ENCODE measurements at regions of chr17 and their contacts with region 1.

Region 1: GRCh38 chr17:11779892-11780291 is 181.6 kb downstream of the DNAH9 start:
- DNase-seq: no peak
- H3K4me3 ChIP-seq: no peak overlapping the region
- H3K27ac ChIP-seq: no peak overlapping the region
- H3K4me1 ChIP-seq: no peaks in the 10 kb centered on the region
- H3K27me3 ChIP-seq: no peaks in the 10 kb centered on the region
- CTCF ChIP-seq: no peak
- EP300 ChIP-seq: no peak
- POLR2A ChIP-seq: no peak

Region 2: DNA sequence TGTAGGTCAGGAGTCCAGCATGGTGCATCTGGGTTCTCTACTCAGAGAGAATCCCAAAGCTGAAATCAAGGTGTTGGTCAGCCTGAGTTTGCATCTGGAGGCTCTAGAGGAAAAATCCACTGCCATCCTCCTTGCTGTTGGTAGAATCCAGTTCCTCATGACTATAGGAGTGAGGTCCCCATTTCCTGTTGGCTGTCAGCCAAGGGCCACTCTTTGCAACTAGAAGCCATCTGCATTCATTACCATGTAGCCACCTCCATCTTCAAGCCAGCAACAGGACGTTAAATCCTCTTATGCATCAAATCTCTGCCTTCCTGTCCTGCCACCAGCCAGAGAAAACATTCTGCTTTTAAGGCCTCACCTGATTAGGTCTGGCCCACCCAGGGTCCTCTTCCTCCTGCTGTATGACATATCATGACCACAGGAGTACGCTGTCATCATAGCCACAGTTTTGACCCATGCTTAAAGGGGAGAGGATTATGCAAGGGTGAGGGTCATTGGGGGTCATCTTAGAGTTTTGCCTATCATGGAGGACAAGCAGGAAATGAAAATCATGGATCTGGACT is 141.1 kb before region 1 on chr17:
- intact Hi-C with region 1: no loop called
- DNase-seq: no peak
- H3K4me3 ChIP-seq: no peak overlapping the region
- H3K27ac ChIP-seq: no peak overlapping the region
- H3K4me1 ChIP-seq: no peaks in the 10 kb centered on the region
- H3K27me3 ChIP-seq: no peaks in the 10 kb centered on the region
- CTCF ChIP-seq: no peak
- EP300 ChIP-seq: no peak
- POLR2A ChIP-seq: no peak

Region 3: DNA sequence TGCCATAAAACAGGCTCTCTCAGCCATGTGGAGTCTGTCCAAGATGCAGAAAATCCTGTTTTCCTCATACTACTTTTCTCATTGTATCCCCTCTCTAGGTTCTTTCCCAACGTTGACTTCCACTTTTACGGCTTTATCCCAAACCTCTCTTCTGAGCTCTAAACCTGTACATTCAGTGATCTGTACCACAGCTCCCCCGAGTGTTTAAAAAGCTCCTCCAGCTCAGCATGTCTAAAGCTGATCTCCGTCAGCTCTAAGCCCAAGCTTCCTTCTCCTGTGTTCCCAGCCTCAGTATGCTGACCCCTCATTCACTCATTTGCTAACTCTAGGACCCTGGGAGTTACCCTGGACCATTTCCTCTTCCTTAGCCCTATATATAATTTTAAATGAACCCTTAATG is 37.0 kb before region 1 on chr17:
- intact Hi-C with region 1: no loop called
- DNase-seq: no peak
- H3K4me3 ChIP-seq: no peak overlapping the region
- H3K27ac ChIP-seq: no peak overlapping the region
- H3K4me1 ChIP-seq: no peaks in the 10 kb centered on the region
- H3K27me3 ChIP-seq: no peaks in the 10 kb centered on the region
- CTCF ChIP-seq: no peak
- EP300 ChIP-seq: no peak
- POLR2A ChIP-seq: no peak

Region 4: DNA sequence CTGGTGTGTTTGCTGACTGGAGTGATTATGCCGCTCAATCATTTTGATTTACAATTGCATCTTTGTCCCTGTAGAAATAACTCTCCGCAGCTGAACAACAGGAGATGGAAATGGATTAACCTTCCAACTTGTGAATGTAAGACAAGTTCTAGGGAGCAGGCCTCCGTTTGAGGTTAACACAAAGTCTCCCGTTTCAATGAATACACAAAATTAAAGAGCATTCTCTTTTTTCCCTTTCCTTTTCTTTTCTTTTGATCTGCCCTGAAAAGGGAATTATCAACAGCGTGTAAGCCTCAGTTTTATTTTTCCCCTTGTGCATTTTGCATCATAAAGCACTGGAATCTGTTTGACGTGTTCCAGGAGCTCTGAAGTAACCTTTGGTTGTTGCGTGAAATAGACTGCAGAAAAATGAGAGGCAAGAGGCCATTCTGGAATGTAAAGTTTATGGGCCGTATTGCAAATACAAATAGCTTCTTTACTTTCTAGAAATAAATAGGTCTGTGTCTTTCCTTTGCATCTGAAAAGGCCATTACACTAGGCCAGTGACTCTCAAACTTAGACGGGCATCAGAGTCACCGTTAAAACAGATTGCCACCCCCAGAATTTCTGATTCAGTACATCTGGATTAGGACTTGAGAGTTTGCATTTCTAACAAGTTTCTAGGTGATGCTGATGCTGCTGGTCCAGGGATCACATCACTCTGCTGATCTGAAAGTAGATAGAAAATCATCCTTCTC is 52.7 kb after region 1 on chr17:
- intact Hi-C with region 1: loop called in 1 of 4 experiments (anchors 10 kb)
- DNase-seq: no peak
- H3K4me3 ChIP-seq: no peak overlapping the region
- H3K27ac ChIP-seq: no peak overlapping the region
- H3K4me1 ChIP-seq: no peaks in the 10 kb centered on the region
- H3K27me3 ChIP-seq: no peaks in the 10 kb centered on the region
- CTCF ChIP-seq: no peak
- EP300 ChIP-seq: no peak
- POLR2A ChIP-seq: no peak

Measured in ovary (tissue), 10 donors.